ENCODE measurements at regions of chr1 and their contacts with region 1.

Region 1: GRCh38 chr1:85576642-85577418 is 3.7 kb upstream of the CCN1 start:
- DNase-seq: peak; percentile 80
- ATAC-seq: peak; percentile 50
- H3K4me3 Mint-ChIP-seq: peak overlapping the region; percentile 62
- H3K27ac Mint-ChIP-seq: no peak overlapping the region
- H3K4me1 Mint-ChIP-seq: peaks cover 31% of the 10 kb centered on the region
- H3K27me3 Mint-ChIP-seq: peaks cover 65% of the 10 kb centered on the region

Region 2: GRCh38 chr1:85464497-85465098 is 112.2 kb before region 1 on chr1:
- CTCF ChIA-PET with region 1: interaction called, 3 read pairs
- POLR2A ChIA-PET with region 1: no interaction called
- intact Hi-C with region 1: loop called in 1 of 2 experiments (anchors 2 kb)
- DNase-seq: peak; percentile 58
- ATAC-seq: peak; percentile 71
- H3K4me3 Mint-ChIP-seq: peak overlapping the region; percentile 52
- H3K27ac Mint-ChIP-seq: no peak overlapping the region
- H3K4me1 Mint-ChIP-seq: peaks cover 4% of the 10 kb centered on the region
- H3K27me3 Mint-ChIP-seq: peaks cover 54% of the 10 kb centered on the region

Region 3: DNA sequence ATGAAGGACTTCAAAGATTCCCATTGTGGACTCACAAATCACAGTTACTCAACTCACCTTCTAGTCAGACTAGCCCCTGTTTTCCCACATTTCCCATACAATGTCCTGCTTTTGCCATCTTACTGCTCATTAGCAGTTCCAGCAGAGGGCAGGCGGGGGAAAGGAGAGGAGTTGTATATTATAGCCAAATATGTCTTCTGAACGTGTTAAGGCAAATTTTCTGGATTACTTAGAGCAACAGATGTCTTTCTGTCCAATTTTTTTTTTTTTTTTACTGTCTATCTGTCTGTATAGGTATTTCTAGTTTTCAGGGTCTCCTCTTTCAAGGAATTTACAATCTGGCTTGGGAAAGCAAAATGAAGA is 81.9 kb before region 1 on chr1:
- CTCF ChIA-PET with region 1: no interaction called
- POLR2A ChIA-PET with region 1: no interaction called
- intact Hi-C with region 1: no loop called
- DNase-seq: no peak
- ATAC-seq: no peak
- H3K4me3 Mint-ChIP-seq: no peak overlapping the region
- H3K27ac Mint-ChIP-seq: no peak overlapping the region
- H3K4me1 Mint-ChIP-seq: no peaks in the 10 kb centered on the region
- H3K27me3 Mint-ChIP-seq: peaks cover under 1% of the 10 kb centered on the region

Region 4: DNA sequence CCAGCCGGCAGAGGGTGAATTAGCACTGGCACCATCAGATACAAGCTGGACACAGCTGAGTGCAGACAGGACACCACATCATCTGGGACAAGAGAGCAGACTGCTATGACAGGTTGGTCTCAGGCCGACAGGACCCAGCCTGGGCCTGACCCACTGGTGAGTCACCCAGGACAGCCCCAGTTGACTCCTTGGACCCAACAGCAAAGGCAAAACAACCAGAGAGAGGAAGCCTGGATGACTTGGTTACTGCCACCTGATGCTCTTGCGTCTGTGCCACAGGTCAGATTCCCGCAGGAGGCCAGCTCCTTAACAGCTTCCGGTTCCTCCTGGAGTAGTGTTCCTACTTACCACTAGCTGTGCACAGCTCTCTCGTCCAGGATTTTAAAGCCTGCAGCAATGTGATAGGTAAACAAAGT is 22.3 kb after region 1 on chr1:
- CTCF ChIA-PET with region 1: no interaction called
- POLR2A ChIA-PET with region 1: no interaction called
- intact Hi-C with region 1: no loop called
- DNase-seq: no peak
- ATAC-seq: no peak
- H3K4me3 Mint-ChIP-seq: no peak overlapping the region
- H3K27ac Mint-ChIP-seq: no peak overlapping the region
- H3K4me1 Mint-ChIP-seq: no peaks in the 10 kb centered on the region
- H3K27me3 Mint-ChIP-seq: no peaks in the 10 kb centered on the region

Region 5: DNA sequence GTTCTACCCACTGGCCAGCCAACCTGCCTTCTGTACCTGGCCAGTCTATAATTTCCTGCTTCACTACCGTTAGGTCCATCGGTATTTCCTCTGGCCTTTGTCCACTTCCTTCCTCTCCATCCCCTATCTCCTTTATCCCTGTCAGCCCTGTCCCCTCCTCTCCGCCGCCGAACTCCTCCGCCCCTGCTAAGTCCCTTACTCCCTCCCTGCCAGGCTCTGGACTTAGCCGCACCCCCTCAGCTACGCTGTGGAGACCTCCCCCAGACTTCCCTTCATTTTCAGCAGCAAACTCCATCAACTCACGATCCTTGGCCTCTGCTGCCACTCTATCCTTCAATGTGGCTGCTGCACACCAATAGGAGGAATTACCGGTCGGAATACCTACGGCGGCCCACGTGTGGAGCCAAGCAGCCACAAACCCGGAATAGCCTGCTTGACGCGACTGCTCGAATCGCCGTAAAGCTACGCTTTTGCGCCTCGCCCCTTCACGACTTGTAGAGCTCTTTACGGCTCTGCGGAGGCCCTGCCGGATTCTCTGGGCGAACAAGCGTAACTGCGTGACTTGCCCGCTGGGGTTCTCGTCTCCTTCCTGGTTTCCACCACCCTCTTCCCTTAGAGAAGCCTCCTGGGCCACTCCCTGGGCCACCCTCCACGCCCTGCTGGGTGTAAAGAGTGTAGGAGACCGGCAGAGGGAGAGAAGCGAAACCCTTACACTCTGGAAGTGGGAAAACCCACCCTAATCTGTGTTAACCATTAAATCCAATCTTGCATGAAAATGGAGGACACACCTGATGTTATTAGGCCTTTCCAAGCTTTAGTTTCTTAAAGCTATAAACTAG is 131.4 kb after region 1 on chr1 and contains the start of gene ZNHIT6:
- CTCF ChIA-PET with region 1: no interaction called
- POLR2A ChIA-PET with region 1: interaction called, 6 read pairs
- intact Hi-C with region 1: loop called in 1 of 2 experiments (anchors 2 kb)
- DNase-seq: peak; percentile 93
- ATAC-seq: peak; percentile 96
- H3K4me3 Mint-ChIP-seq: no peak within 1 kb of the TSS
- H3K27ac Mint-ChIP-seq: no peak within 1 kb of the TSS
- H3K4me1 Mint-ChIP-seq: peaks cover 26% of the 10 kb centered on the region
- H3K27me3 Mint-ChIP-seq: no peaks in the 10 kb centered on the region
- total RNA-seq, gene ZNHIT6: 20.7 to 23.8 TPM